ENCODE measurements at regions of chr3 and their contacts with region 1.

Region 1: DNA sequence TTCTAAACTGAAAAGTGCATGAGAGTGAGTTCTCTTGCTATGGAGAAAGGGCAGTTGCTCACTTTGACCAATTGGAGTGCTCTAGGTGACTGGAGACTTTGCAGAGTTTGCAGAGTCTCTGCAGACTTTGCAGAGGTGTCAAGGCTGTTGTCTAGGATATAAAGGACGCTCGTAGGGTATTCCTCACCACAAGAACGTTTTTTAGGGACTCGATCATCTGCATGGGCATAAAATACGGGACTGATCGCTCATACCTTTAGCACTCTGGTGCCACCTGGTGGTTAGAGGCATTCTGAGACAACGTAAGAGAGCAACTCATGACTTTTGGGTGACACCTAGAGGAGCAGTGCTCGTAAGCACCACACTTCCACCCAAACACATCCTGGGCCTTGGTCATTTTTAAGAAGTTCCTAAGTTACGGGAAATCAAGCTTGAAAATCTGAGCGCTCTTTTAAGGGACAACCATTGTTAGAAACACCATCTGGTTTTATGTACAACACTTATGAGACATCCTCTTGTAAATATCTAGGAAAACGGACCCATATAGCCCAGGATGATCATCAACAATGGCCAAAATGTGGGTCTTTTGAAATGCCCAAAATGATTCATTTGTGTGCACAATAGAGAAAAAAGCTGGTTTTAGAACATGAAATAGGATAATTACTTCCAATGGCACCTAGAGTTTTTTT is 51.6 kb upstream of the XCR1 start:
- DNase-seq: peak; percentile 58 to 96 (median 85)
- ATAC-seq: peak; percentile 97 to 99 (median 97)
- H3K4me3 ChIP-seq: no peak overlapping the region
- H3K4me3 Mint-ChIP-seq: no peak overlapping the region
- H3K27ac ChIP-seq: no peak overlapping the region
- H3K27ac Mint-ChIP-seq: no peak overlapping the region
- H3K4me1 ChIP-seq: peaks cover 2 to 6% of the 10 kb centered on the region in 2 experiments
- H3K4me1 Mint-ChIP-seq: peaks cover 10 to 12% (median 10%) of the 10 kb centered on the region in 3 donors
- H3K27me3 ChIP-seq: no peaks in the 10 kb centered on the region
- H3K27me3 Mint-ChIP-seq: no peaks in the 10 kb centered on the region

Region 2: GRCh38 chr3:45817831-45818522 is 260.9 kb before region 1 on chr3:
- CTCF ChIA-PET with region 1: no interaction called
- POLR2A ChIA-PET with region 1: no interaction called
- DNase-seq: no peak
- ATAC-seq: no peak
- H3K4me3 ChIP-seq: no peak overlapping the region
- H3K4me3 Mint-ChIP-seq: no peak overlapping the region
- H3K27ac ChIP-seq: no peak overlapping the region
- H3K27ac Mint-ChIP-seq: no peak overlapping the region
- H3K4me1 ChIP-seq: no peaks in the 10 kb centered on the region
- H3K4me1 Mint-ChIP-seq: peaks cover 0 to 6% (median 0%) of the 10 kb centered on the region in 3 donors
- H3K27me3 ChIP-seq: no peaks in the 10 kb centered on the region
- H3K27me3 Mint-ChIP-seq: no peaks in the 10 kb centered on the region

Region 3: GRCh38 chr3:45832691-45833090 is 246.2 kb before region 1 on chr3:
- CTCF ChIA-PET with region 1: no interaction called
- POLR2A ChIA-PET with region 1: no interaction called
- DNase-seq: peak in 1 of 35 experiments; percentile 21
- ATAC-seq: no peak
- H3K4me3 ChIP-seq: no peak overlapping the region
- H3K4me3 Mint-ChIP-seq: no peak overlapping the region
- H3K27ac ChIP-seq: no peak overlapping the region
- H3K27ac Mint-ChIP-seq: no peak overlapping the region
- H3K4me1 ChIP-seq: no peaks in the 10 kb centered on the region
- H3K4me1 Mint-ChIP-seq: no peaks in the 10 kb centered on the region
- H3K27me3 ChIP-seq: no peaks in the 10 kb centered on the region
- H3K27me3 Mint-ChIP-seq: no peaks in the 10 kb centered on the region

Region 4: GRCh38 chr3:46065294-46065721 is 13.5 kb before region 1 on chr3:
- CTCF ChIA-PET with region 1: interaction called, 15 to 26 read pairs
- POLR2A ChIA-PET with region 1: interaction called in 1 of 2 experiments, 7 read pairs
- DNase-seq: peak; percentile 52 to 95 (median 82)
- ATAC-seq: peak; percentile 88 to 91 (median 90)
- H3K4me3 ChIP-seq: no peak overlapping the region
- H3K4me3 Mint-ChIP-seq: peak overlapping the region; percentile 37 to 66 (median 65)
- H3K27ac ChIP-seq: peak overlapping the region; percentile 62
- H3K27ac Mint-ChIP-seq: peak overlapping the region; percentile 88 to 89
- H3K4me1 ChIP-seq: peaks cover 50 to 53% of the 10 kb centered on the region in 2 experiments
- H3K4me1 Mint-ChIP-seq: peaks cover 77 to 78% (median 78%) of the 10 kb centered on the region in 3 donors
- H3K27me3 ChIP-seq: peaks cover 0 to 2% of the 10 kb centered on the region in 2 experiments
- H3K27me3 Mint-ChIP-seq: no peaks in the 10 kb centered on the region

Region 5: DNA sequence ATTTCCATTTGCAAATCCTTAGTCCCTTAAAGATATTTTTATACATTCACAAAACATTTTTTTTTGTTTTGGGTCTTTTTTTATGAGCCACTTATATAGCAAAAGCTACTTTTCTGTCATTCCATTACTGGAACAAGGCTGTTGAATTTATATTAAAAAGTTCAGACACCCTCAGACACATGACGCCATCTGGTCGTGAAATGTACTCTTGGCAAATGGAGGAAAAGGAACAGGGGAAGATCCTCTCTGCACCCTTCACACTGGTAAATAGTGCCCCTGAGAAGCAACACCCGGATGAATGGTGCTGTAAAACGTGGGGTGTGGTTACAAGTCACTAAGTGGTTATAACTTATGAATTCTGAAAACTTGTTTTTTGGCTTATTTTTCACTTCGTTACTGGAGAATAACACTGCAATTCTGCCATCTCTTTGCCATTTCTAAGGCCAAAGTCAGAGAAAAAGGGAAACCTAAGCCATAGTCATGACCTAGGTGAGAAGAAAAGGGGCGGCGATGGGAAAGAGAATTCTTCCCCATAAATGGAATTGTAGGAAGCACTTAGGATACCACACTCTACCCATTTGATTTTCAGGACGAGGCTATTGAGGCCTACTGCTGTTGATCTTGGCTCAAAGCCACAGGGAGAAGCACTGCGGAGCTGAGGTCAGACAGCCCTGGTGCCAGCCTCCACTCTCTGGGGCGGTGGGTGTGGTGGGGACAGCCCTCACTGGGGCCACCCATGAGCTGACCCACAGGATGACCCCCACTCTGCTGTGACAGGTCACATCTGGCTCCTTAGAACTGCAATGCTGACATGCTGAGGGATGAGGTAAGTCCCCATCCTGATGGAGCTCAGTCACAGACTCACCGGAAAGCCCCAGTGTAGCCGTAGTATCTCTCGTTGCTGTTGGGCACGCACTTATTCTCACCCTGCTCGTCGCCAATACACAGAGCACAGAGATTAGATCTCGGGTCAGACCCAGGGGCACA is 364.0 kb after region 1 on chr3:
- CTCF ChIA-PET with region 1: no interaction called
- POLR2A ChIA-PET with region 1: no interaction called
- DNase-seq: peak in 20 of 35 experiments; percentile 5 to 68 (median 27)
- ATAC-seq: no peak
- H3K4me3 ChIP-seq: no peak overlapping the region
- H3K4me3 Mint-ChIP-seq: no peak overlapping the region
- H3K27ac ChIP-seq: no peak overlapping the region
- H3K27ac Mint-ChIP-seq: no peak overlapping the region
- H3K4me1 ChIP-seq: peaks cover 19 to 33% of the 10 kb centered on the region in 2 experiments
- H3K4me1 Mint-ChIP-seq: peaks cover 20 to 25% (median 24%) of the 10 kb centered on the region in 3 donors
- H3K27me3 ChIP-seq: peaks cover 0 to 4% of the 10 kb centered on the region in 2 experiments
- H3K27me3 Mint-ChIP-seq: peaks cover 0 to 2% of the 10 kb centered on the region in 2 donors

Region 6: GRCh38 chr3:46558184-46559043 is 479.6 kb after region 1 on chr3:
- CTCF ChIA-PET with region 1: no interaction called
- POLR2A ChIA-PET with region 1: no interaction called
- DNase-seq: peak; percentile 43 to 87 (median 63)
- ATAC-seq: peak; percentile 98 to 99 (median 98)
- H3K4me3 ChIP-seq: peak overlapping the region; percentile 46 to 80
- H3K4me3 Mint-ChIP-seq: peak overlapping the region; percentile 63 to 78 (median 76)
- H3K27ac ChIP-seq: no peak overlapping the region
- H3K27ac Mint-ChIP-seq: peak overlapping the region; percentile 66 to 74
- H3K4me1 ChIP-seq: peaks cover 6 to 12% of the 10 kb centered on the region in 2 experiments
- H3K4me1 Mint-ChIP-seq: peaks cover 11 to 24% (median 24%) of the 10 kb centered on the region in 3 donors
- H3K27me3 ChIP-seq: peaks cover 0 to 9% of the 10 kb centered on the region in 2 experiments
- H3K27me3 Mint-ChIP-seq: no peaks in the 10 kb centered on the region